GM10248 (cell line): ENCODE measurements at regions of chr12 and their contacts with region 1.

Region 1: GRCh38 chr12:12032851-12033588 is 37.7 kb upstream of the BCL2L14 start:
- DNase-seq: peak; percentile 57
- CTCF ChIP-seq: peak; percentile 81

Region 2: DNA sequence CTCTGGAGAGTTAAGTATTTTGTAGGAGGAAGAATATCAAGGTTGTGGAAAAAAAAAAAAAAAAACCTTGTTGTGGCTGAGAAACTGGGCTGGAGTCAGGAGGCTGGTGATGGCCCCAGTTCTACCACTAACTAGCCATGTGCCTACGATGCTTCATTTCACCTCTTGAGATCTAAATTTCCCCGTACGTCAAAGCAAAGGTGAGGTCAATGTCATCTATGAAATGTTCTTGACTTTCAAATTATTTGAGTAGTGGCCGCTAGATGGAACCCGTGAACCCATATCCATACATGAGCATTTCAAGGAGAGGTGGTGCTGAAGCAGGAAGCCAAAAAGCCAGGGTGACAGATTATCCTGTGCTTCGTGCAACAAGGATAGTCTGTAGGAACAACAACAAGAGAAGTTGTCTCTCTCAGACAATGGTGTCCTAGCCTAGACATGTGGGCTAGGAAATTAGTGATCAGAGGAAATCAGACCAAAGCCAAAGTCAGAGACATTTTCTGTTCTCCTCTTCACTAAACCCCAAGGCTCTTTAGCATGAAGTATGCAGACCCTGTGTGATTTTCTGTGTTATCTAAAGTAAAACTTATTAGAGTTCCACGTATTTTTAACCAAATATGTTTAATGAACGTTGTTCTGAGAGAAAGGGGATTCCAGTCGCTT is 479.0 kb before region 1 on chr12:
- CTCF ChIA-PET with region 1: interaction called, 23 read pairs
- POLR2A ChIA-PET with region 1: no interaction called
- DNase-seq: peak; percentile 70
- CTCF ChIP-seq: peak; percentile 53

Region 3: GRCh38 chr12:11581179-11581755 is 451.8 kb before region 1 on chr12:
- CTCF ChIA-PET with region 1: interaction called, 133 read pairs
- POLR2A ChIA-PET with region 1: no interaction called
- DNase-seq: peak; percentile 38
- CTCF ChIP-seq: peak; percentile 27

Region 4: GRCh38 chr12:11730299-11731041 is 302.6 kb before region 1 on chr12:
- CTCF ChIA-PET with region 1: interaction called, 10 read pairs
- POLR2A ChIA-PET with region 1: no interaction called
- DNase-seq: peak; percentile 54
- CTCF ChIP-seq: no peak

Region 5: GRCh38 chr12:12008931-12009611 is 23.9 kb before region 1 on chr12:
- CTCF ChIA-PET with region 1: interaction called, 33 read pairs
- POLR2A ChIA-PET with region 1: no interaction called
- DNase-seq: peak; percentile 64
- CTCF ChIP-seq: peak; percentile 57

Region 6: GRCh38 chr12:12022306-12022936 is 10.6 kb before region 1 on chr12:
- CTCF ChIA-PET with region 1: interaction called, 13 read pairs
- POLR2A ChIA-PET with region 1: no interaction called
- DNase-seq: no peak
- CTCF ChIP-seq: no peak

Region 7: GRCh38 chr12:12467688-12468261 is 434.8 kb after region 1 on chr12:
- CTCF ChIA-PET with region 1: no interaction called
- POLR2A ChIA-PET with region 1: no interaction called
- DNase-seq: no peak
- CTCF ChIP-seq: no peak